Posterior vena cava (tissue), 2 donors: ENCODE measurements at regions of chr1 and their contacts with region 1.

Region 1: DNA sequence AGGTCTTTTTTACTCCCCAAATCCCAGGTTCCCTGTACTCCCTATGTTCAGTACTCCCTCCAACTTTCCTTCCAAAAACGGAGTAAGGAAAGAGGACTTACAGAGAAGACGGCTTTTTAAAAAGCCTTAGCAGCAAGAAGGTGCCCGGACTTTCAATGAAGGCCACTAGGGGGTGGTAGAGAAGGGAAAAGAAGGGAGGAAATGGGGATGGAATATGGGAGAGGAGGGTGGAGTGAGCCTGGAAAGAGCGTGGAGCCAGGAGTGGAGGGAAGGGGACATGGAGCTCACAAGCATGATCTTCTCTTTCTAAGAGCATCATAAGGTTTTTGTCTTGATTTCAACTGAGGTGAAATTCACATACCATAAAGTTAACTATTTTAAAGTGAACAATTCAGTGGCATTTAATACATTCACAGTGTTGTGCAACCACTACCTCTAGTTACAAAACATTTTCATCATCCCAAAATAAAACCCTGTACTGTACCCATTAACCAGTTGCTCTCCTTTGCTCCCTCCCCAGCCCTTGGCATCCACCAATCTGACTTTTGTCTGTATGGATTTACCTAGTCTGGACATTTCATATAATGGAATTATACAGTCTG is 129.9 kb downstream of the ZNF281 start:
- DNase-seq: no peak

Region 2: DNA sequence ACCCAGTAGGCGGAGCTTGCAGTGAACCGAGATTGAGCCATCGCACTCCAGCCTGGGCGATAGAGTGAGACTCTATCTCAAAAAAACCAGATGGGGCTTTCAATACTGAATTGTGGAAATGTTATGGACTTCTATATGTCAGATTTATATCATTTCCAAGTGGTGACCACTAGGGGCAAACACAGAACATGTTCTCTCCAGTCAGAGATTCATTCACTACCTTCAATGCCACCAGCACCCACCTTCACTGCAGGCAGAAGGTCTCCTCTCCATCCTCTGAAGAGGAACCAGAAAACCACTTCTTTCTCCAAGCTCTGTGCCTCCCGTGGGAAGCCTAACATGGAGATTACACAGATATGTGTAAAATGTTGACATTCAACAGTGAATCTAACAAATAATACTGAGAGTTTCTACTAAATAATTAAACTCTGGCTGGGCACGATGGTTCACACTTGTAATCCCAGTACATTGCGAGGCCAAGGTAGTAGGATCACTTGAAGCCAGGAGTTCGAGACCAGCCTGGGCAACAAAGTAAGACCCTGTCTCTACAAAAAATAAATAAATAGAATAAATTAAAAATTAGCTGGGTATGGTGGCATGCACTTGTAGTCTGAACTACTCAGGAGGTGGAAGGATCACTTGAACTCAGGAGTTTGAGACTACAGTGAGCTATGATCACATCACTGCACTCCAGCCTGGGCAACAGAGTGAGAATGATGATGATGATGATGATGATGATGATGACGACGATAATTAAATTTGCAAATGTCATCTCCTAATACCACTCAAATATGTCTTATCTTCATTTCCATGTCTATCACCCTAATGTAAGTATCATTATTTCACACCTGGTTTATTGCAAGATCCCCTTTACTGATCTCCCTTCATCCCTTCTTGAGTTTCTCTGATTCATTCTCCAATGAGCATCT is 21.2 kb before region 1 on chr1:
- intact Hi-C with region 1: loop called in 1 of 2 experiments (anchors 1 kb)
- DNase-seq: no peak

Region 3: DNA sequence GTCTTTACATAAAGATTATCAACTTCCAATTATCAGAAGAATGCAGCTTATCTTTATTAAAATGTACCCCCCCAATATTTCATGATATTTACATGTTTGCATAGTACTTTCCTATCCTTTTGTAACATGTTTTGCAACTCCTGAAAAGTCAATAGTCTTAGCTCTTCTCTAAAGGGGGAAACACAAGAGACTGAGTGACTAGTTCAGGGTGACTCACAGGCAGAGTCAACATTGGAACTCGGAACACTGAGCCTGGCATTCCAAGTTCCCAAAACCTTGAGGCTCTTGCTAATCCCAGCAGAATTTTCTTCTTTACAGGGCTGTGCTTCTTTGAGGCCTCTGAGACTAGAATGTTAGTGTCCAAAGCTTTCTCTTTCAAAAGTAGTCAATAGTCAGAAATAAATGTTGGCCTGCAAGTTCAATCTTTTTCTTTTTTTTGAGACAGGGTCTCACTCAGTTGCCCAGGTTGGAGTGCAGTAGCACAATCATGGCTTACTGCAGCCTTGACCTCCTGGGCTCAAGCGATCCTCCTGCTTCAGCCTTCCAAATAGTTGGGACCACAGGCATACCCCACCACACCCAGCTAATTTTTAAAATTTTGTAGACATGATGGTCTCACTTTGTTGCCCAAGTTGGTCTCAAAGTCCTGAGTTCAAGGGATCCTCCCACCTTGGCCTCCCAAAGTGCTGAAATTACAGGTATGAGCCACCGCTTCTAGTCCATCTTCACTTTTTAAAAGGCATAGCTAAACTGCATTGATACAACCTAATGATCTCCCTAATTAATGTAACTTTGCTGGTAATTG is 92.4 kb after region 1 on chr1:
- intact Hi-C with region 1: no loop called
- DNase-seq: no peak

Region 4: GRCh38 chr1:200488375-200489165 is 208.7 kb after region 1 on chr1:
- intact Hi-C with region 1: loop called (anchors 5 to 10 kb)
- DNase-seq: no peak